ENCODE measurements at regions of chr17 and their contacts with region 1.

Region 1: DNA sequence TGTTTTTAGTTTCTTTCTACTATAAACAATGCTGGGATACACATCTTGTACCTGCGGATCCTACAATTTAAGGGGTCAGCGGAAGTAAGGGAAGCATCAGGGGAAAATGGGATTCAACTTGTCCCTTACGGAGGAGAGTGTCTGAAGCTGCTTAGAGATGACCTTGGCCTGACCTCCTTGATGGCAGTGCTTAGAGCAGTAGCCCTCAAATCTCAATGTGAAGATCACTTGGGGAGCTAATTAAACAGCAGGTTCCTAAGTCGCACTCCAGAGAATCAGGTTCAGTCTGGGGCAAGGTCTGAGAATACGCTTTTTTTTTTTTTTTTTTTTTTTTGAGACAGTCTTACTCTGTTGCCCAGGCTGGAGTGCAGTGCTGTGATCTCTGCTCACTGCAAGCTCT is 9.6 kb upstream of the METTL16 start:
- DNase-seq: no peak
- H3K4me3 ChIP-seq: no peak overlapping the region
- H3K27ac ChIP-seq: no peak overlapping the region
- H3K4me1 ChIP-seq: no peaks in the 10 kb centered on the region
- H3K27me3 ChIP-seq: no peaks in the 10 kb centered on the region
- CTCF ChIP-seq: no peak
- POLR2A ChIP-seq: no peak

Region 2: DNA sequence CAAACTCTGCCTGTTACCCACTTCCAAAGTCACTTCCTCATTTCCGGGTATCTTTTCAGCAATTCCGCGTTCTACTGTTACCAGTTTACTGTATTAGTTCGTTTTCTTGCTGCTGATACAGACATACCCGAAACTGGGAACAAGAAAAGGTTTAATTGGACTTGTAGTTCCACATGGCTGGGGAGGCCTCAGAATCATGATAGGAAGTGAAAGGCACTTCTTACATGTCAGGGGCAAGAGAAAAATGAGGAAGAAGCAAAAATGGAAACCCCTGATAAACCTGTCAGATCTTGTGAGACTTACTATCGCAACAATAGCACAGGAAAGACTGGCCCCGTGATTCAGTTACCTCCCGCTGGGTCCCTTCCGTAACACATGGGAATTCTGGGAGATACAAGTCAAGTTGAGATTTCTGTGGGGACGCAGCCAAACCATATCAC is 103.1 kb after region 1 on chr17:
- intact Hi-C with region 1: no loop called
- DNase-seq: no peak
- H3K4me3 ChIP-seq: no peak overlapping the region
- H3K27ac ChIP-seq: peak overlapping the region in 1 of 5 donors; percentile 36
- H3K4me1 ChIP-seq: peaks cover 20 to 52% of the 10 kb centered on the region in 2 donors
- H3K27me3 ChIP-seq: no peaks in the 10 kb centered on the region
- CTCF ChIP-seq: no peak
- POLR2A ChIP-seq: no peak

Region 3: DNA sequence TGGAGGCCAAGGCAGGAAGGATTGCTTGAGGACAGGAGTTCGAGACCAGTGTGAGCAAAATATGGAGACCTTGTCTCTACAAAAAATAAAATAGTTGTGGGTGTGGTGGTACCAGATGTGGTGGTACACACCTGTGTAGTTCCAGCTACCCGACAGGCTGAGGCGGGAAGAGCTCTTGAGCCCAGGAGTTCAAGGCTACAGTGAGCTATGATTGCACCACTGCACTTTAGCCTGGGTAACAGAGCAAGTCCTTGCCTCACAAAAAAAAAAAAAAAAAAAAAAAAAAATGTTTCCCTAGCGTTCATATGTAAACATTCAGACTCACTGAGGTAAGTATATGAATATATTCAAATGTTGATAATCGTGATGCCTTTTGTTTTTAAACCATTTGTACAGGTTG is 150.8 kb after region 1 on chr17:
- intact Hi-C with region 1: loop called in 1 of 2 experiments (anchors 5 kb)
- DNase-seq: no peak
- H3K4me3 ChIP-seq: no peak overlapping the region
- H3K27ac ChIP-seq: no peak overlapping the region
- H3K4me1 ChIP-seq: no peaks in the 10 kb centered on the region
- H3K27me3 ChIP-seq: no peaks in the 10 kb centered on the region
- CTCF ChIP-seq: no peak
- POLR2A ChIP-seq: no peak

Measured in adrenal gland (tissue), 19 donors.